ENCODE measurements at regions of chr22 and their contacts with region 1.

Region 1: DNA sequence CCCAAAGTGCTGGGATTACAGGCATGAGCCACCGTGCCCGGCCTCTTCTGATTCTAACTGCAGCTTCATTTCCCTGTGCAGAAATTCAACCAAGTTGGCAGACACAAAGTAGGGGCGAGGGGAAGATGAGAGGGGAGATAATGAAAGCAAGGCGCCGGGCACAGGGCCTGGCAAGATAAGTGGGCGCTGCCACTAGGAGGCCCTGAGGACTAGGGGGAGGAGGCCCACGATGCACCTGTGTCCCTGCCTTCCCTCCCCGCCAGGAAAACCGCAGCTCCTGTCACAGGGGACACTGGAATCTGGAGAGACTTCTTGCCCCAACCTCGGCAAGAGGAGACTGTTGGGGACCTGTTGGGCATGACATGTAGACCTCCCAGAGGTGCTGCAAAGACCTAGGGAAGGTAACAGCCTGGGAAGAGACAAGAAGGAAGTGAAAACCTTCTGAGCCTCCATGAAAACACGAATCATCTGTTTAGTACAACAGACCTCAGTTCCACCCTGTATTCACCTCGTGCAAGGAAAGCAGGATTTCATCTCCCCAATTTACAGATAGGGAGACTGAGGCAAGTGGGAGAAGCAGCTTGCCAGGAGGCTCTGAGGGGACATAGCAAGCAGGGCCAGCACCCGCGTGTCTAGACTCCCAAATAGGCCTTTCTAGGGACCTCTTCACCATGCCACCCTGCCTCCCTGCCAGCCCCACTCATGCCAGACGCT is 3.1 kb upstream of the LGALS1 start:
- DNase-seq: peak; percentile 50
- H3K4me3 Mint-ChIP-seq: no peak overlapping the region
- H3K27ac Mint-ChIP-seq: peak overlapping the region; percentile 76
- H3K4me1 Mint-ChIP-seq: peaks cover 54% of the 10 kb centered on the region
- H3K27me3 Mint-ChIP-seq: no peaks in the 10 kb centered on the region

Region 2: GRCh38 chr22:37588546-37589215 is 83.7 kb before region 1 on chr22:
- CTCF ChIA-PET with region 1: no interaction called
- DNase-seq: no peak
- H3K4me3 Mint-ChIP-seq: no peak overlapping the region
- H3K27ac Mint-ChIP-seq: no peak overlapping the region
- H3K4me1 Mint-ChIP-seq: peaks cover 13% of the 10 kb centered on the region
- H3K27me3 Mint-ChIP-seq: peaks cover 61% of the 10 kb centered on the region

Region 3: DNA sequence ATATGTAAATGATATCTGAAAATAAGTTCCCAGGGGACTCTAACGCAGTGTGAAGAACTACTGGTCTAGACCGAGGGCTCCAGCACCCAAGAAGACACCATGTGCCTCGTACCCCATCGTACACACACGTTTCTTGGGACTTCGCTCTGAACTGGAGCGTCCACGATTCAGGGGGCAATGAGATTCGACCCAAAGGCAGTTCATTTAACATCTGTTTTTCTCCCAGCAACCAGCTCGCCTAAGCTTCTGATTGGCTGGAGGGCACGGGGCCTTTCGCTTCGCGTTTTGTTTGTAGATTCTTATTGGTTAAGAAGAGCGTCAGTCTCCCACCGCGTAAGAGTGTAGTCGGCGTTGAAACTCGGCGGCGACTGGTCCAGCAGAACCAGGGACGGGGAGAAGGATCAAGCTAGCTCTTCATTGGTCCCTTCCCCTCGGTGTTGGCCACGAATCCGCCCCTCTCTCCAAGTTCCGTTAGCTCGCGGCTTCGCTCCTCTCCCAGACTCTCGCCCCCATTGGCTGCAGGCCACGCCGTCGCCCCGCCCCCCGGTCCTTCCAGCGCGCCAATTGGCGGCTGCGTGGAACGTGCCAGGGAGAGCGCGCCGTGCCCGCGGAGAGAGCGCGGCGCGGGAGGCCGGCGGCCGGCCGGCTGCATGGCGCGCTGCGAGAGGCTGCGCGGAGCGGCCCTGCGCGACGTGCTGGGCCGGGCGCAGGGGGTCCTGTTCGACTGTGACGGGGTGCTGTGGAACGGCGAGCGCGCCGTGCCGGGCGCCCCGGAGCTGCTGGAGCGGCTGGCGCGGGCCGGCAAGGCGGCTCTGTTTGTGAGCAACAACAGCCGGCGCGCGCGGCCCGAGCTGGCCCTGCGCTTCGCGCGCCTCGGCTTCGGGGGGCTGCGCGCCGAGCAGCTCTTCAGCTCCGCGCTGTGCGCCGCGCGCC is 14.0 kb before region 1 on chr22 and contains the start of gene PDXP:
- CTCF ChIA-PET with region 1: interaction called, 15 read pairs
- DNase-seq: peak; percentile 99
- H3K4me3 Mint-ChIP-seq: peak within 1 kb of the TSS; percentile 81
- H3K27ac Mint-ChIP-seq: peak within 1 kb of the TSS; percentile 90
- H3K4me1 Mint-ChIP-seq: peaks cover 40% of the 10 kb centered on the region
- H3K27me3 Mint-ChIP-seq: no peaks in the 10 kb centered on the region